Astrocyte of the cerebellum (primary cell): ENCODE measurements at regions of chr14 and their contacts with region 1.

Region 1: GRCh38 chr14:35347323-35348043 is 55.3 kb downstream of the PSMA6 start:
- DNase-seq: no peak
- H3K4me3 ChIP-seq: no peak overlapping the region
- CTCF ChIP-seq: no peak

Region 2: DNA sequence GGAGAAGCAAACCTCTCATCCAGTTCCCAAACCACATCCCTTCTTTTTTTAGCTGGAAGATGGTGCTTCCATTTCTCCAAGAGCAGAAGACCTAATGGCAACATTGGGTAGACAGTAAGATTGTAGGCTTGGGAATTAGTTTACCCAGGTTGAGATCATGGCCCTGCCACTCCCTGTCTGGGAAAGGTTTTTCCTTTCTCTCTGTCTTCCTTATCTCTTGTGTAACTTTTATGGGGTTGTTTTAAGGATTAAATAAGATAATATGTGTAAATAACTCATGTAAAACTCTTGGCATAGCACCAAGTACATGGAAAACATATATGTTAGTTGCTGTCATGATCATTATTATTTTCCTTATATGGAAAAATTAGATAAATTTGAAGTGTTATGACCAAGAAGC is 78.5 kb before region 1 on chr14:
- in situ Hi-C with region 1: loop called (anchors 5 kb)
- DNase-seq: no peak
- H3K4me3 ChIP-seq: no peak overlapping the region
- CTCF ChIP-seq: no peak